HepG2 (cell line): ENCODE measurements at regions of chr2 and their contacts with region 1.

Region 1: GRCh38 chr2:102020596-102021181 is 28.9 kb downstream of the IL1R2 start:
- DNase-seq: peak; percentile 80
- ATAC-seq: peak; percentile 95
- H3K4me3 ChIP-seq: no peak overlapping the region
- H3K27ac ChIP-seq: no peak overlapping the region
- H3K4me1 ChIP-seq: peaks cover 57% of the 10 kb centered on the region
- H3K27me3 ChIP-seq: no peaks in the 10 kb centered on the region
- CTCF ChIP-seq: peak; percentile 100
- EP300 ChIP-seq: no peak; a peak in 1 of 4 replicates
- POLR2A ChIP-seq: no peak
- RAD21 ChIP-seq: peak; percentile 99

Region 2: GRCh38 chr2:102070058-102070642 is 49.5 kb after region 1 on chr2:
- CTCF ChIA-PET with region 1: no interaction called
- POLR2A ChIA-PET with region 1: no interaction called
- in situ Hi-C with region 1: no loop called
- intact Hi-C with region 1: loop called (anchors 2 kb)
- DNase-seq: peak; percentile 79
- ATAC-seq: peak; percentile 96
- H3K4me3 ChIP-seq: peak overlapping the region; percentile 2 to 51 (median 39); a peak in 5 of 6 replicates
- H3K27ac ChIP-seq: peak overlapping the region; percentile 83
- H3K4me1 ChIP-seq: peaks cover 77% of the 10 kb centered on the region
- H3K27me3 ChIP-seq: no peaks in the 10 kb centered on the region
- CTCF ChIP-seq: peak; percentile 80
- EP300 ChIP-seq: 0 out of 4 replicates have a peak, but pooled peaks of 1 of the 2 experiments have one; percentile 4
- POLR2A ChIP-seq: no peak
- RAD21 ChIP-seq: peak; percentile 73

Region 3: DNA sequence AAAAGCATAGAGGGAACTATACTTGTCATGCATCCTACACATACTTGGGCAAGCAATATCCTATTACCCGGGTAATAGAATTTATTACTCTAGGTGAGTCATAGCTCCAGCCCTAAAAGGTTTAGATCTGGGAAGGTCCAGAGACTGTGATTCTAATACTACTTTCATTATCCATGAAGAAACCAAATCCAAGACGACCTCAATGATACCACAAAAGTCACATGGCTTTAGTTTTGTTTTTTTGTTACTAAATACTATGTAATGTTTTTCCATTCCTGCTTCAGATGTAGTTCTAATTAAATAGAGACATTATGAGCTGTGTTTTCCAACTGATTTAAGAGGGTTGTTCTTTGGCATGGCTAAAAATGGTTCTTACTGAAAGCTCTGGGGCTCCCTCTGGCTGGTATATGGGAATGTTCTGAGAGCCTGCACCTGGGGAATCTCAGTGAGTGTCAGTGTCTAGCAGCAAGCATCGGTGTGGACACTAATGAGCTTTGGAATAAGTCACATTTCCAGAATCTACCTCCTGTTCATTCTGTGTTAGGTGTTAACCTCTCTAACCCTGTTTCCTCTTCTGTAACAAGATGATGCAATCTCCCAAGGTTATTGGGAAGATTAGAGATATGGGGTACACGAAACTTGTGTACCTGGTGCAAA is 145.6 kb after region 1 on chr2:
- CTCF ChIA-PET with region 1: interaction called, 46 read pairs
- POLR2A ChIA-PET with region 1: interaction called, 5 read pairs
- in situ Hi-C with region 1: no loop called
- intact Hi-C with region 1: loop called (anchors 1 kb)
- DNase-seq: peak; percentile 67
- ATAC-seq: peak; percentile 97
- H3K4me3 ChIP-seq: no peak overlapping the region
- H3K27ac ChIP-seq: no peak overlapping the region
- H3K4me1 ChIP-seq: peaks cover 17% of the 10 kb centered on the region
- H3K27me3 ChIP-seq: no peaks in the 10 kb centered on the region
- CTCF ChIP-seq: peak; percentile 83
- EP300 ChIP-seq: peak in 1 of 2 experiments; percentile 52; a peak in 1 of 4 replicates
- POLR2A ChIP-seq: no peak
- RAD21 ChIP-seq: peak; percentile 86

Region 4: DNA sequence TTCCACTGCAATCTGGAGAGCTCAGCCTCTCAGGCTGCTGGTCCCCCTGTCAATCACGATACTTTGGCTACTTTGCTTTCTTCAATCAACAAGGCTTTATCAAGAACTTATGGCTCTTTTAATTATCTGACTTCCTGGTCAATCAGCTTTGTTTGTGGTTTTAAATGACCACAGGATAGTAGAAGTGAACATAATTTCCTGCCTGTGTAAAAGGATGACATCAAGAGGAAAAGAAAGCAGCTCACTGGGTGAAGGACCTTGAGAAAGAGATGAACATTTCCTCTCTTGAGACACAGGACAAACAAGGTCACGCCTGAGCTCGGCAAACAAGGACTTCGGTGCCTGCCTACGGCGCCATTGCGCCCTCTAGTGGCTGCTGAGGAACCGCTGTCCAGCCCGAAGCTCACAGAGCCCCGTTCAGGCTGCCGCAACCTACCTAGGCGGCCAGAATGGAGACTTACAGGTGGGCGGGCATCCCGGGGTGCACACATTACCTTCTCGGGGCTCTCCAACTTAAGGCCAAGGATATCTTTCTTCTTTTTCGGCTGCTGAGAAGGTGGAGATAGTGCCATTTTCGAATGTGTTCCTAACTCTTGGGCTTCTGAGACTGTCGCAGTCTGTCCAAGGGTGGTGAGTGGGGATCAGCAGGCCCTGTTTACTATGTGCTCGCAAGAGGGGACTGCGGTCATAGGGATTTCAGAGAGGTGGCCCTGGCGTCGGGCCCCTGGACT is 220.1 kb after region 1 on chr2:
- CTCF ChIA-PET with region 1: interaction called, 38 read pairs
- POLR2A ChIA-PET with region 1: interaction called, 5 read pairs
- in situ Hi-C with region 1: loop called (anchors 5 kb)
- intact Hi-C with region 1: loop called (anchors 1 kb)
- DNase-seq: peak; percentile 88
- ATAC-seq: peak; percentile 97
- H3K4me3 ChIP-seq: peak overlapping the region in 2 of 3 experiments; percentile 12 to 55; a peak in 3 of 6 replicates
- H3K27ac ChIP-seq: no peak overlapping the region
- H3K4me1 ChIP-seq: peaks cover 49% of the 10 kb centered on the region
- H3K27me3 ChIP-seq: peaks cover 0 to 38% of the 10 kb centered on the region in 2 experiments; a peak in 3 of 5 replicates
- CTCF ChIP-seq: peak; percentile 100
- EP300 ChIP-seq: peak in 1 of 2 experiments; percentile 86; a peak in 2 of 4 replicates
- POLR2A ChIP-seq: no peak
- RAD21 ChIP-seq: peak; percentile 97